ENCODE measurements at regions of chr13 and their contacts with region 1.

Region 1: GRCh38 chr13:93201992-93202558 is 24.5 kb upstream of the GPC6 start:
- DNase-seq: no peak
- H3K4me3 ChIP-seq: no peak overlapping the region
- CTCF ChIP-seq: no peak
- POLR2A ChIP-seq: no peak

Region 2: DNA sequence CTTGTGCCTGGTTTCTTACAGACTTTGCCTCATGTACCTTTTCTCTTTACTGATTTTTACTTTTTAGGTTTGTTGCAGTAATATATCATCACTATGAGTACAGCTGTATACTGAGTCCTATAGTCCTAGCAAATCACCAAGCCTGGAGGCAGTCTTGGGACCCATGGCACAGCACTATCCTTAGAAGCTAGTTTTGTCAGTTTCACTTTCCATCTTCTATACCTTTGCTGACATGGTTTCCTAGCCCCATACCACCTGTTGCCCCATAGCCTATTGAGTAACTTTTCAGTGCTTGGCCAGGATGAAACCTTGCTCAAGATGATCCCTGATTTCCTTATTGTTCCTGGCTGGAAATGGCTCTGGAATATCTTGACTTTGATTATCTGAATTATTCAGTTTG is 977.2 kb before region 1 on chr13:
- intact Hi-C with region 1: loop called (anchors 5 kb)
- DNase-seq: no peak
- H3K4me3 ChIP-seq: no peak overlapping the region
- CTCF ChIP-seq: no peak
- POLR2A ChIP-seq: no peak

Region 3: DNA sequence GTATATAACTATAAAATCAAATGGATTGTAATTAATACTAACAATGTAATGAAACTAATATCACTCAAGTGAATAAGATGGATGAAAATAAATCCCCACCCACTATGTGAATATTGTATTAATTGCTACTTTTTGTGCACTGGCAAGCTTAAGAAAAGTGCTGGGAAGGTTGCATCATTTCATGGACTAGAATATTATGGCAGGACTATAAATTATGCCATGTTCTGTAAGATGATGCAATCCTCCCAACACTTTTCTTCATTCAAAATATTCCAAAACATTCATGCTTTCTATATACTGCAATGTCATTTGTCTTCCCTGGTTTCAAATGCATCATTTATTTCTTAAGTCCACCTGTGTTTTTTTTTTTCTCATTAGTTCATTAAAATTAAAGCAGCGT is 433.0 kb before region 1 on chr13:
- intact Hi-C with region 1: no loop called
- DNase-seq: no peak
- H3K4me3 ChIP-seq: no peak overlapping the region
- CTCF ChIP-seq: no peak
- POLR2A ChIP-seq: no peak

Region 4: GRCh38 chr13:92974905-92975429 is 227.1 kb before region 1 on chr13:
- intact Hi-C with region 1: no loop called
- DNase-seq: no peak
- H3K4me3 ChIP-seq: no peak overlapping the region
- CTCF ChIP-seq: no peak
- POLR2A ChIP-seq: no peak